Adrenal gland (tissue), 19 donors: ENCODE measurements at regions of chr18 and their contacts with region 1.

Region 1: DNA sequence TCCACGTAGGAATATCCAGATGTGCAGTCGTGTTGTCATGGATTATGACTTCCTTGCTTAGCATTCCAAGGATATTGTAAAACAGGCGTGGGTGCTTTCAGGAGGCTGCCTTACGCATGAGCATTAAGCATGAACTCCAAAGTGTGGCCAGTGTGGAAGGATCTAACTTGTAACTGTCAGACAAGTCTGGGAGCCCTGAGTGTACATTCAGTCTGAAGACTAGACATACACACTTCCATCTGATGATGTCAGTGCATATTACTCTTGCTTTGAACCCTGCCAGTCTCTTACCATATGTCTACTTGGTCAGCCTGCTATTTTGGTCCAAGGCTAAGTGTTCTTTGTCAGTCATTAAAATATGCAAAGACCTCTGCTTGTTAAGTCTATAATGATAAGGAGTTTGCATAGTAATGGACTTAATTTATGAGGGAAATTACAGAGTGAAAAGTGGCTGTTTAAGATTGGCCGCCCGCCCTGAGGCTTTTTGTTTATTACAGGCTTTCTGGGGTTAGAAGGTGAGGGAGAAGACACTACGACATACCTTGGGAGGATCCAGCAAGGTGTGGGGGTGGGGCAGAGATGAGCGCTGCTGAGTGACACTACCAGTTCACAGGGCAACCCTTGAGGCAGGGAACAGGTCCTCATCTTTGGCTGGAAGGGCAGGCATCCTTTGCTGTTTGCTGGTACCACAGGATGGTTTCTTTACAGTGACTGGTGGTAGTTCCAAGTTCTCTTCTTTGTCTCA is 48.3 kb downstream of the CABLES1 start:
- DNase-seq: no peak
- H3K4me3 ChIP-seq: no peak overlapping the region
- H3K27ac ChIP-seq: no peak overlapping the region
- H3K4me1 ChIP-seq: no peaks in the 10 kb centered on the region
- H3K27me3 ChIP-seq: no peaks in the 10 kb centered on the region
- CTCF ChIP-seq: no peak
- POLR2A ChIP-seq: no peak

Region 2: GRCh38 chr18:22778996-22779395 is 404.6 kb before region 1 on chr18:
- intact Hi-C with region 1: no loop called
- DNase-seq: peak in 3 of 7 donors; percentile 21 to 65 (median 37)
- H3K4me3 ChIP-seq: no peak overlapping the region
- H3K27ac ChIP-seq: no peak overlapping the region
- H3K4me1 ChIP-seq: peaks cover 0 to 6% of the 10 kb centered on the region in 2 donors
- H3K27me3 ChIP-seq: no peaks in the 10 kb centered on the region
- CTCF ChIP-seq: no peak
- POLR2A ChIP-seq: no peak

Region 3: GRCh38 chr18:23143016-23143814 is 40.4 kb before region 1 on chr18:
- intact Hi-C with region 1: loop called in 1 of 2 experiments (anchors 5 kb)
- DNase-seq: peak in 6 of 7 donors; percentile 39 to 69 (median 56)
- H3K4me3 ChIP-seq: no peak overlapping the region
- H3K27ac ChIP-seq: peak overlapping the region in 2 of 5 donors; percentile 66 to 71
- H3K4me1 ChIP-seq: peaks cover 19 to 42% of the 10 kb centered on the region in 2 donors
- H3K27me3 ChIP-seq: no peaks in the 10 kb centered on the region
- CTCF ChIP-seq: no peak
- POLR2A ChIP-seq: no peak

Region 4: GRCh38 chr18:23231340-23232021 is 47.9 kb after region 1 on chr18:
- intact Hi-C with region 1: loop called in 1 of 2 experiments (anchors 10 kb)
- DNase-seq: peak; percentile 28 to 79 (median 56)
- H3K4me3 ChIP-seq: no peak overlapping the region
- H3K27ac ChIP-seq: peak overlapping the region in 3 of 5 donors; percentile 5 to 60 (median 50)
- H3K4me1 ChIP-seq: peaks cover 7 to 28% of the 10 kb centered on the region in 2 donors
- H3K27me3 ChIP-seq: no peaks in the 10 kb centered on the region
- CTCF ChIP-seq: no peak
- POLR2A ChIP-seq: no peak

Region 5: GRCh38 chr18:23377669-23378301 is 194.2 kb after region 1 on chr18:
- intact Hi-C with region 1: no loop called
- DNase-seq: peak in 3 of 7 donors; percentile 33 to 41 (median 36)
- H3K4me3 ChIP-seq: no peak overlapping the region
- H3K27ac ChIP-seq: peak overlapping the region in 4 of 5 donors; percentile 58 to 77 (median 74)
- H3K4me1 ChIP-seq: peaks cover 0 to 17% of the 10 kb centered on the region in 2 donors
- H3K27me3 ChIP-seq: no peaks in the 10 kb centered on the region
- CTCF ChIP-seq: no peak
- POLR2A ChIP-seq: no peak